ENCODE measurements at regions of chr17 and their contacts with region 1.

Region 1: DNA sequence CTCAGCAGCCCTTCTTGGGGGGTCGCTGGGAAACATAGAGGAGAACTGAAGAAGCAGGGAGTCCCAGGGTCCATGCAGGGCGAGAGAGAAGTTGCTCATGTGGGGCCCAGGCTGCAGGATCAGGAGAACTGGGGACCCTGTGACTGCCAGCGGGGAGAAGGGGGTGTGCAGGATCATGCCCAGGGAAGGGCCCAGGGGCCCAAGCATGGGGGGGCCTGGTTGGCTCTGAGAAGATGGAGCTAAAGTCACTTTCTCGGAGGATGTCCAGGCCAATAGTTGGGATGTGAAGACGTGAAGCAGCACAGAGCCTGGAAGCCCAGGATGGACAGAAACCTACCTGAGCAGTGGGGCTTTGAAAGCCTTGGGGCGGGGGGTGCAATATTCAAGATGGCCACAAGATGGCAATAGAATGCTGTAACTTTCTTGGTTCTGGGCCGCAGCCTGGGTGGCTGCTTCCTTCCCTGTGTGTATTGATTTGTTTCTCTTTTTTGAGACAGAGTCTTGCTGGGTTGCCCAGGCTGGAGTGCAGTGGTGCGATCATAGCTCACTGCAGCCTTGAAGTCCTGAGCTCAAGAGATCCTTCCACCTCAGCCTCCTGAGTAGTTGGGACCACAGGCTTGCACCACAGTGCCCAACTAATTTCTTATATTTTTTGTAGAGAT is 3.4 kb downstream of the STH start:
- DNase-seq: peak; percentile 60 to 77 (median 62)
- H3K4me3 ChIP-seq: no peak overlapping the region
- H3K4me3 Mint-ChIP-seq: no peak overlapping the region
- H3K27ac ChIP-seq: no peak overlapping the region
- H3K27ac Mint-ChIP-seq: peak overlapping the region in 3 of 8 donors; percentile 72 to 86 (median 85)
- H3K4me1 ChIP-seq: peaks cover 4% of the 10 kb centered on the region
- H3K4me1 Mint-ChIP-seq: peaks cover 0 to 3% (median 2%) of the 10 kb centered on the region in 3 donors
- H3K27me3 ChIP-seq: no peaks in the 10 kb centered on the region
- H3K27me3 Mint-ChIP-seq: peaks cover 0 to 1% of the 10 kb centered on the region in 2 donors

Region 2: DNA sequence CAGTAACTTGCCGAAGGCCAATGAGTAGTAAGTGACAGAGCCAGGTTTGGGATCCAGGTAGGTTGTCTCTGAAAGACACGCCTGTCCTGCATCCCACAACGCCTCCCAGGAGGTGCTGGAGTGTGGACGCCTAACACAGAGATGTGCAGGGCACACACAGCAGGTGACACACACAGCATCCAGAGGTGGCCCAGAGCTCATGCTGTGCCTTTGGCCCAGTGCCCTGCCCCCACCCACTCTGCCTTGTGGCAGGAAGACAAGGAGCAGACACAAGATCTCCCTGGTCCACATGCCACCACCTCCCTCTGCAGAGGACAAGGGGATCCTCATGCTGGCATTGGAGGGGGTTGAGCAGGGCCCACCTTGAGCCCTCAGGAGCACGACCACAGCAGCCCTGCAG is 18.1 kb before region 1 on chr17:
- CTCF ChIA-PET with region 1: no interaction called
- POLR2A ChIA-PET with region 1: no interaction called
- DNase-seq: no peak
- H3K4me3 ChIP-seq: no peak overlapping the region
- H3K4me3 Mint-ChIP-seq: no peak overlapping the region
- H3K27ac ChIP-seq: no peak overlapping the region
- H3K27ac Mint-ChIP-seq: no peak overlapping the region
- H3K4me1 ChIP-seq: no peaks in the 10 kb centered on the region
- H3K4me1 Mint-ChIP-seq: no peaks in the 10 kb centered on the region
- H3K27me3 ChIP-seq: no peaks in the 10 kb centered on the region
- H3K27me3 Mint-ChIP-seq: peaks cover 0 to 5% of the 10 kb centered on the region in 2 donors

Region 3: DNA sequence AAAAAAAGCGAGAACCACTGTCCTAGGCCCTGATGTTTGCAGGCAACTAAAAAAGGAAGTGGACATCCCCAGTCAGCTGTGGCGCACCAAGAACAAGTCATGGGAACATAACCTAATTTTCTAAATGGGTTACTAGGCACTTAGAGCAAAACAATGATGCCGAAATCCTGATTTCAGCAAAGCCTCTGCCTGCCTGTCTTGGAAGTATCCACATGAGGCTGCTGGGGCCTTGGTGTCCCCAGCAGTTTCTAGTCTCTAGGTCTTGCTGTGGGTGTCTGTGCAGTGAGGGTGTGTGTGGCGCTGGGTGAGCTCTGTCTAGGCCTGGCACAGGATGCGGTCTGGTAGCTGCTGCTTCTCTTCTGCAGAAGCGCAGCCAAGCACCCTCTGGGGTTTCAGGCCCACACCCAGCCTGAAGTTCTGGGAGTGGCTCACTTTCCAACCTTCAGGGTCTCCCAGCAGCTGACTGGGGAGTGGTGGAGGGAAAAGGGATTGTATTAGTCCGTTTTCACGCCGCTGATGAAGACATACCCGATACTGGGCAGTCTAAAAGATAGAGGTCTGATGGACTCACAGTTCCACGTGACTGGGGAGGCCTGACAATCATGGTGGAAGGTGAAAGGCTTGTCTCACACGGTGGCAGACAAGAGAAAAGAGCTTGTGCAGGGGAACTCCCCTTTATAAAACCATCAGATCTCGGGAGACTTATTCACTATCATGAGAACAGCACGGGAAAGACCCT is 17.8 kb after region 1 on chr17:
- CTCF ChIA-PET with region 1: interaction called, 27 read pairs
- POLR2A ChIA-PET with region 1: no interaction called
- DNase-seq: peak; percentile 44 to 86 (median 61)
- H3K4me3 ChIP-seq: no peak overlapping the region
- H3K4me3 Mint-ChIP-seq: peak overlapping the region; percentile 16 to 86 (median 35)
- H3K27ac ChIP-seq: peak overlapping the region; percentile 72
- H3K27ac Mint-ChIP-seq: peak overlapping the region; percentile 86 to 100 (median 94)
- H3K4me1 ChIP-seq: peaks cover 35% of the 10 kb centered on the region
- H3K4me1 Mint-ChIP-seq: peaks cover 29 to 45% (median 42%) of the 10 kb centered on the region in 3 donors
- H3K27me3 ChIP-seq: no peaks in the 10 kb centered on the region
- H3K27me3 Mint-ChIP-seq: no peaks in the 10 kb centered on the region

Region 4: DNA sequence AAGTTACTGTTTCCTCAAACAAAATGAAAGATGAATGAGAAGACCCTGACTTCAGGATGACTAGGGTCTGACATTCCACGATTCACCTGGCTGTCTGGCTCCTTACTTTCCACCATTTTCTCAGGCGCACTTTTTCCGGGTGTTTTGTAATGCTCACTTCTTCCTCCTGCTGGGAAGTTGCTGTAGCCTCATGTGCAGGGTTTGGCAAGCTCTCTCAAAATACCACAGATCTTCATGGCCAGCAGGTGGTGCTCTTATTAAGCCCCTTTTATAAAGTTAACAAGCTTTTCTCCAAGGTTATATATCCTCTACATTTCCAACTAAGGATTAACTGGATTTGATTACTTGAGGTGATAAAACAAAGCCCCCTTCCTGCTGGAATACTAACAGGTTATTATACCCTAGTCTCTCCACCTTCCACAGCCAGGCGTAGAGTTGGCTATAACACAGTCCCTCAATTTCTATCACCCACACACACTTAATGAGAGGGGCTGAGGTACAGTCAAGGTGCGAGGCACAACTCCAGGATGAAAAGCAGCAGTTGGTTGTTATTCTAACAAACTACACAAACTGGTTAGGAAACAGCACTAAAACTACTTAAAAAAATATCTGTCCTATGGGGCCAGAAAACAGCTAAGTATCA is 42.0 kb after region 1 on chr17:
- CTCF ChIA-PET with region 1: interaction called, 37 read pairs
- POLR2A ChIA-PET with region 1: no interaction called
- DNase-seq: peak; percentile 28 to 61 (median 32)
- H3K4me3 ChIP-seq: no peak overlapping the region
- H3K4me3 Mint-ChIP-seq: no peak overlapping the region
- H3K27ac ChIP-seq: no peak overlapping the region
- H3K27ac Mint-ChIP-seq: peak overlapping the region; percentile 5 to 89 (median 62)
- H3K4me1 ChIP-seq: no peaks in the 10 kb centered on the region
- H3K4me1 Mint-ChIP-seq: peaks cover 22 to 27% (median 25%) of the 10 kb centered on the region in 3 donors
- H3K27me3 ChIP-seq: no peaks in the 10 kb centered on the region
- H3K27me3 Mint-ChIP-seq: peaks cover 0 to under 1% of the 10 kb centered on the region in 2 donors

Region 5: GRCh38 chr17:46121841-46122485 is 119.5 kb after region 1 on chr17:
- CTCF ChIA-PET with region 1: no interaction called
- POLR2A ChIA-PET with region 1: no interaction called
- DNase-seq: no peak
- H3K4me3 ChIP-seq: no peak overlapping the region
- H3K4me3 Mint-ChIP-seq: peak overlapping the region in 6 of 7 donors; percentile 38 to 71 (median 56)
- H3K27ac ChIP-seq: no peak overlapping the region
- H3K27ac Mint-ChIP-seq: peak overlapping the region; percentile 42 to 92 (median 76)
- H3K4me1 ChIP-seq: peaks cover 84% of the 10 kb centered on the region
- H3K4me1 Mint-ChIP-seq: peaks cover 82 to 97% (median 93%) of the 10 kb centered on the region in 3 donors
- H3K27me3 ChIP-seq: no peaks in the 10 kb centered on the region
- H3K27me3 Mint-ChIP-seq: no peaks in the 10 kb centered on the region